ENCODE measurements at regions of chr5 and their contacts with region 1.

Region 1: DNA sequence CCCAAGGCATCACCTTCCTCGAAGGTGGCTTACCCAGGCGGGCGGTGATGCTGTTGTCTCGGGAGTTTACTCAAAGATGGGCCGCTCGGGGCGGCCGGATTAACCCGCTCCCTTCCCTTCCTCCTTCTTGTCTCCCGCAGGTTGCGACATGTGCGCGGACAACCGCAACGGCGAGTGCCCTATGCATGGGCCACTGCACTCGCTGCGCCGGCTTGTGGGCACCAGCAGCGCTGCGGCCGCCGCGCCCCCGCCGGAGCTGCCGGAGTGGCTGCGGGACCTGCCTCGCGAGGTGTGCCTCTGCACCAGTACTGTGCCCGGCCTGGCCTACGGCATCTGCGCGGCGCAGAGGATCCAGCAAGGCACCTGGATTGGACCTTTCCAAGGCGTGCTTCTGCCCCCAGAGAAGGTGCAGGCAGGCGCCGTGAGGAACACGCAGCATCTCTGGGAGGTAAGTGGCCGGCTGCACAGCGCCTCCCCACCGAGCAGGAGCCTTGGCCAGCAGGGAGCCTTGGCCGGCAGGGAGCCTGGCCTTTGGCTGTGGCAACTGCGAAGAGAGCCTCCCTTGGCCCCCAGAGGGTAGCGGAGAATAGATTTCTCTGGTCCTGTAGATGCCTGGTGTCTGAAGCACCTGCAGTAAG is 10.6 kb downstream of the PRDM6 start:
- DNase-seq: peak in 1 of 2 donors; percentile 82
- ATAC-seq: peak; percentile 45
- H3K4me3 ChIP-seq: peak overlapping the region; percentile 76 to 78
- H3K27ac ChIP-seq: peak overlapping the region; percentile 97 to 98
- H3K4me1 ChIP-seq: peaks cover 0 to 3% of the 10 kb centered on the region in 2 donors
- H3K27me3 ChIP-seq: no peaks in the 10 kb centered on the region

Region 2: DNA sequence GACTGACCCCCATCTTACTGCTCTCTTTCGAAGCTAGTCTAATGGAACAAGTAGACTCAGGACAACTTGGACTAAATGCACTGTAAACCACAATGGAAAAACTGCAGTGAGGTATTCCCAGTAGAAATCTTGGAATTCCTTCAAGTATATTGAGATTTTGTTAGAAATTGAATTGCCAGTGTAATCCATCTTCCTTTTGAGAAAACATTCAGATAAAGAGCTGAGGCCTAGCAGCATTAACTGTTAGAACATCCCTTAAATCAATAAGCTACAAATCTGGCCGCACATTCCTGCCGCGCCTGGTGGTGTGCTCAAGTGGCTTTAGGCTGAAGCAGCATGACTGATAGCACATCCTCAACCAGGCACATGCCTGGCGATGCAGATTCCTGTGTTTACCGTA is 92.5 kb before region 1 on chr5:
- intact Hi-C with region 1: no loop called
- DNase-seq: no peak
- ATAC-seq: no peak
- H3K4me3 ChIP-seq: no peak overlapping the region
- H3K27ac ChIP-seq: no peak overlapping the region
- H3K4me1 ChIP-seq: no peaks in the 10 kb centered on the region
- H3K27me3 ChIP-seq: no peaks in the 10 kb centered on the region

Region 3: DNA sequence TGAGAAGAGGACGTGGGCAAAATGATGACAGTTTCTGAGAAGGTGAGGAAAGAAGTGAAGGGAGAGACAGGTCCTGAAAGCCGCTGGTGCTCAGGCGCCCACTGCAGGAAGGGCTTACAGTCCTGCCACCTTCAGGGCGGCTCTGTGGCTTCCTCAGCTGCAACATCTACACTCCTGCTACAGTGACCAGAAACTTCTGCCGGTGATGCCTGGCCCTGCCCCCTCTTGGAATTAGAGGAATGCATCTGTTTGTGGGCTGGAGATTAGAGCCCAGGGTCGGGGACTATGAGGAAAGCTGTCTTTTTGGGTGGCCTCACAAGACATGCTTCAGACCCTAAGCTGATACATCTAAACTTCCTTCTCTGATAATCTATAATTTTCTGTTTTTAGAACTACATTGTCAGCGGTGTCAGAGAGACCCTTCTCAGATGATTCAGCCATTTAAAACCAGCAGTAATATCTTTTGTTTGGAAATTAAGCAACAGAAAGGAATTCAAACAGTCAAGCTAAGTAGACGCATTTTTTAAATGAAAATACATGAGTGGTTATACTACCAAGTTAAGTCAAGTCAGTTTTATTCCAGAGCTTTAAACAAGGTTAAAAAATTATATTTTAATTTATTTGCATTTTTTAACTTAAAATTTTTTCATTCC is 19.8 kb after region 1 on chr5:
- intact Hi-C with region 1: loop called in 1 of 2 experiments (anchors 2 kb)
- DNase-seq: peak; percentile 65 to 81
- ATAC-seq: peak; percentile 53
- H3K4me3 ChIP-seq: no peak overlapping the region
- H3K27ac ChIP-seq: peak overlapping the region; percentile 38 to 82
- H3K4me1 ChIP-seq: peaks cover 12 to 13% of the 10 kb centered on the region in 2 donors
- H3K27me3 ChIP-seq: no peaks in the 10 kb centered on the region

Region 4: DNA sequence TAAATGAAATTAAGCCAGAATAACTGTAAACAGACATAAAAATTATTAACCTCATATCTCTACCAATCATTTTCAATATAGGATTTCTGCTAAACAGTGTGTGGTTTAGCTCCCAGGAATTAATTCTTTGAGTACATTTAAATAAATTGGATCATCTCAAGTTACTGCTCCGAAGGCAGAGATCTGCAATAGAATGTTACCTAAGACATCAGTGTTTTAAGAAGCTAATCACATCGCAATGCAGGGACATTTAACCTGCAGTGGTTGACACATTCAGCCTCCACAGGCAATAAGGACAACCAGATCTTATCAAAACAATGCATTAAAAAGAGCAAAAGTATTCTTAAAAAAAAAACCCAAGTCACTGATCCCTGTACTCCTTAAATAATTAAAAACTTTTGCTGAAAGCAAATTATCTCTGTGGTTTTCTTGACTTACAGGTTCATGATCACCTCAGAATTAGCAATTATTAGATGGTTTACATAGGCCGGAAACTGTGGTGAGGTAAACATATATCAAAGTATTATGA is 35.1 kb after region 1 on chr5:
- intact Hi-C with region 1: loop called (anchors 5 kb)
- DNase-seq: no peak
- ATAC-seq: no peak
- H3K4me3 ChIP-seq: no peak overlapping the region
- H3K27ac ChIP-seq: peak overlapping the region in 1 of 2 donors; percentile 9
- H3K4me1 ChIP-seq: peaks cover 4 to 14% of the 10 kb centered on the region in 2 donors
- H3K27me3 ChIP-seq: no peaks in the 10 kb centered on the region

Region 5: GRCh38 chr5:123157791-123158581 is 58.4 kb after region 1 on chr5:
- intact Hi-C with region 1: loop called (anchors 5 kb)
- DNase-seq: no peak
- ATAC-seq: peak; percentile 68
- H3K4me3 ChIP-seq: no peak overlapping the region
- H3K27ac ChIP-seq: peak overlapping the region; percentile 57 to 86
- H3K4me1 ChIP-seq: peaks cover 4 to 32% of the 10 kb centered on the region in 2 donors
- H3K27me3 ChIP-seq: no peaks in the 10 kb centered on the region

Region 6: GRCh38 chr5:123285122-123286023 is 185.7 kb after region 1 on chr5:
- intact Hi-C with region 1: loop called (anchors 2 to 5 kb)
- DNase-seq: peak; percentile 66 to 80
- ATAC-seq: peak; percentile 75
- H3K4me3 ChIP-seq: peak overlapping the region; percentile 42 to 62
- H3K27ac ChIP-seq: peak overlapping the region; percentile 55 to 93
- H3K4me1 ChIP-seq: peaks cover 0 to 2% of the 10 kb centered on the region in 2 donors
- H3K27me3 ChIP-seq: no peaks in the 10 kb centered on the region

Region 7: DNA sequence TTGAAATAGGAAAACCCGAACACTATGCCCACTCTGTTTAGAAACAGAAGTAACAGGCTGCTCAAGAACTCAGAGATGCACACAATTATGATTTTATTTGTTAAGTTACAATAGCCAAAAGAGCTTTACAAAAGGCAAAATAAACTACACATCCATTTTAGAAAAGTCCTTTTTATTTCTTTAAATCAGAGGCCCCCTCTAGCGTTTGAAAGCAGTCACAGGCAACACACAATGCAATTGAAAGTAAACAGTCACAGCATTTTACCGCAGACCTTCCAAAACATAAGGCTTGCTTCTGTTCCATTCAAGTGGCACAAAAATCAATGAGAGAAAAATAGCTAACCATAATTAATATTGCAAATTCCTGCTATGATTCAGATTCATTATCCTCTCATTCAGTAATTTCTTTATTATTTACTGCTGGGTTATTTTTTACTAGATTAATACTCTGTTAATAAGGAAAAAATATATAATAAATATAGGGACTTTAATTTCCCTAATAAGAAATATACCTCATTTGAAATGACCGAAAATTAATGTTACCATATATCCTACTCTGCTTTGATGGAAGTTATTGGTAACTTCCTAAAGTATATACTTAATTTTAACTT is 245.3 kb after region 1 on chr5:
- intact Hi-C with region 1: loop called (anchors 2 to 5 kb)
- DNase-seq: no peak
- ATAC-seq: peak; percentile 47
- H3K4me3 ChIP-seq: no peak overlapping the region
- H3K27ac ChIP-seq: no peak overlapping the region
- H3K4me1 ChIP-seq: peaks cover 1 to 2% of the 10 kb centered on the region in 2 donors
- H3K27me3 ChIP-seq: no peaks in the 10 kb centered on the region

Region 8: DNA sequence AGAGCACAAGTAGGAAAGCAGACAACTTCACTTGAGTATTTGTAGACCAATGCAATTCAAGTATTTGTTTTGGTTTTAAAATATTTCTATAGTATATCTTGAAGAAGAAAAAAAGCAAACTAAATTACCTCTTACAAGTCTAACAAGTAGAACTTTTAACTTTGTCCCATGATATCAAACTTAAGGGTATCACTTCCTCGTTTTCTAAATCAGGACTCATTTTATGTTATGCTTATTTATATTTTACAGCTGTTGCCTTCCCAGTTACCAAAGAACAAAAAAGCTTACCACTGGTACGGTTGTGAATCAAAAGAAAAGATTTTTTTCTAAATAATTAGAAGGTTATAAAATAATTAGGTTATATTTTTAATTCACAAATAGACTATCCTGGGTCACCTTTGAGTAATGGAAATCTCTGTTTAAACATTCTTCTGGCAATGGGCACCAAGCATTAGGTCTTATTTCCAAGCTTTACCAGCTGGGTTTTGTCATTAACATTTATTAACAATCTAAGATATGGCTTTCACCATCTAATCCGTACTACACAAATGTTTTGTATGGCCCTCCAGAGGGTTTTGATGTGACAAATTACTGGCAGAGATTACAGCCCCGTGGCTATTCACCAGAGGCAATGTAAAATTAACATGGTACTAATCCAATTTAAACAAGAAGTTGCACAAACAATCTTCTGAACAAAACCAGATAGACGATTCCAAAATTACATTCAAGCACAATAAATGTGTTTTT is 260.0 kb after region 1 on chr5:
- intact Hi-C with region 1: loop called (anchors 5 kb)
- DNase-seq: no peak
- ATAC-seq: peak; percentile 88
- H3K4me3 ChIP-seq: no peak overlapping the region
- H3K27ac ChIP-seq: no peak overlapping the region
- H3K4me1 ChIP-seq: peaks cover 0 to 7% of the 10 kb centered on the region in 2 donors
- H3K27me3 ChIP-seq: no peaks in the 10 kb centered on the region

Measured in aorta (tissue), 5 donors.